ENCODE measurements at regions of chr12 and their contacts with region 1.

Region 1: GRCh38 chr12:57476162-57476992 is 3.3 kb downstream of the ARHGAP9 start:
- DNase-seq: peak; percentile 64
- ATAC-seq: peak; percentile 26

Region 2: GRCh38 chr12:57063991-57064685 is 412.2 kb before region 1 on chr12:
- intact Hi-C with region 1: no loop called
- DNase-seq: no peak
- ATAC-seq: no peak

Region 3: DNA sequence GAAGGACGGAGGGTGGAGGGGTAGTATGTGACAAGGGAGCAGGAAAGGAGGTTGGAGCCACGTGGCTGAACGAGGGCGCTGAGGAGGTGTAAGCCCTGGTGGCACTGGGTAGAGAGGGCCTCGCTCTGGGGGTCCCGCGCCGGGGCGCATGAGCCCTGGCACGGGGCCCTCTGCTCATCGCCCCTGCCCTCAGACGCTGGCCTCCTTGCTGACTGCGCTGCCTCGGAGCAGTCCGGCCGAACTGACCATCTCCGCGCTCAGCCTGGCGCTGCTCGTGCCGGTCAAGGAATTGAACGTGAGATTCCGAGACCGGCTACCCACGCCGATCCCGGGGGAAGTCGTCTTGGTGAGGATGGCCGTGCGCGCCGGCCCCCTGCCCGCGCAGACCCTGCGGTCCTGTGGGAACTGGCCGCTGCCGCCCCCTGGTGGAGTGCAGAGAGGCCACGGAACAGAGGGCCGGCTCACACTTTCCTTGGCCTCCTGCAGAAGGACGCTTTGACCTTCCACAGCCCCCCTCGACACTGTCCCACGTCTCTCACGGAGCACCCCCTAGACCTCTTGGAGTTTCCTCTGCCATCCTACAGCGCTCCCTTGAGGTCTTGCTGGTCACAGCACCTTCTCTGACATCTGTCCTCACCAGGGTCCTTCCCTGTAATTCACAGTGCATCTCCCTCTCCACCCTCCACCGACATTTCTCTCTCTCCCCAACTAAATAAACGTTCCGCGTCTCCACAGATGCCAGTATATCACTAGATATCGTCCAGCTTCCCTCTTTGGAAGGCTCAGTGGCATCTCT is 145.3 kb after region 1 on chr12:
- intact Hi-C with region 1: loop called (anchors 10 kb)
- DNase-seq: peak; percentile 80
- ATAC-seq: peak; percentile 84

Measured in Right ventricle myocardium superior (tissue), 1 donor.